ENCODE measurements at regions of chr1 and their contacts with region 1.

Region 1: GRCh38 chr1:228131766-228132165 is 8.3 kb upstream of the GUK1 start:
- DNase-seq: no peak
- ATAC-seq: no peak
- H3K4me3 ChIP-seq: no peak overlapping the region
- H3K4me3 Mint-ChIP-seq: no peak overlapping the region
- H3K27ac ChIP-seq: no peak overlapping the region
- H3K27ac Mint-ChIP-seq: no peak overlapping the region
- H3K4me1 ChIP-seq: no peaks in the 10 kb centered on the region
- H3K4me1 Mint-ChIP-seq: peaks cover 13% of the 10 kb centered on the region
- H3K27me3 ChIP-seq: no peaks in the 10 kb centered on the region
- H3K27me3 Mint-ChIP-seq: peaks cover 9% of the 10 kb centered on the region
- CTCF ChIP-seq: no peak

Region 2: DNA sequence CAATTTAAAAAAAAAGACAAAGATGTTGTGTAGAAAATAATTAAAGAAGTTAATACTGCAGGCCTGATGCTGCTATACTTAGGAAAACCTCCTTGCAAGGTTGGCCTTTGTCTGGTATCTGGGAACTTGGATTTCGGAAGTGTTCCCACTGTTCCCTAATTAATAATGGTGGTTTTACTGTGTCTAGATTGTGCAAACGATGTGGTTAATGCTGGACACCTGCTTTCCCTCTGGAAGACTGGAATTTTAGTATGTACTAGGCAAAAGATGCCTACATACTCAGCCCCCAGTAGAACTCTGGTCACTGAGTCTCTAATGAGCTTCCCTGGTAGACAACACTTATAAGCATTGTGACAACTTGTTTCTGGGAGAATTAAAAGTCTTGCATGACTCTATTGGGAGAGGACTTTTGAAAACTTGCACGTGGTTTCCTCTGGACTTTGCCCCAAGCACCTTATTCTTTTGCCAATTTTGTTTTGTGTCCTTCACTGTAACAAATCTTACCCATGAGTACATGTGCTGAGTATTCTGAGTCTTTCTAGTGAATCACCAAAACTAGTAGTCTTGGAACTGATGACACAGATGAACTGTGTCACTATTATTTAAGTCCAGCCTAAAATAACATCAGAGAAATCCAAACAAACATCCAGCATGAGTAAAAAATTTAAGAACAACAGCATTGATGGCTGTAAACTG is 1863.2 kb before region 1 on chr1:
- CTCF ChIA-PET with region 1: no interaction called
- POLR2A ChIA-PET with region 1: no interaction called
- intact Hi-C with region 1: no loop called
- DNase-seq: no peak
- ATAC-seq: no peak
- H3K4me3 ChIP-seq: no peak overlapping the region
- H3K4me3 Mint-ChIP-seq: no peak overlapping the region
- H3K27ac ChIP-seq: no peak overlapping the region
- H3K27ac Mint-ChIP-seq: no peak overlapping the region
- H3K4me1 ChIP-seq: no peaks in the 10 kb centered on the region
- H3K4me1 Mint-ChIP-seq: no peaks in the 10 kb centered on the region
- H3K27me3 ChIP-seq: no peaks in the 10 kb centered on the region
- H3K27me3 Mint-ChIP-seq: no peaks in the 10 kb centered on the region
- CTCF ChIP-seq: no peak

Region 3: GRCh38 chr1:227343727-227344551 is 787.8 kb before region 1 on chr1:
- CTCF ChIA-PET with region 1: no interaction called
- POLR2A ChIA-PET with region 1: no interaction called
- intact Hi-C with region 1: no loop called
- DNase-seq: no peak
- ATAC-seq: no peak
- H3K4me3 ChIP-seq: no peak overlapping the region
- H3K4me3 Mint-ChIP-seq: no peak overlapping the region
- H3K27ac ChIP-seq: no peak overlapping the region
- H3K27ac Mint-ChIP-seq: no peak overlapping the region
- H3K4me1 ChIP-seq: no peaks in the 10 kb centered on the region
- H3K4me1 Mint-ChIP-seq: no peaks in the 10 kb centered on the region
- H3K27me3 ChIP-seq: peaks cover 0 to 4% of the 10 kb centered on the region in 2 experiments
- H3K27me3 Mint-ChIP-seq: peaks cover 4% of the 10 kb centered on the region
- CTCF ChIP-seq: no peak

Region 4: GRCh38 chr1:228120351-228120750 is 11.4 kb before region 1 on chr1:
- CTCF ChIA-PET with region 1: interaction called, 11 read pairs
- POLR2A ChIA-PET with region 1: no interaction called
- intact Hi-C with region 1: no loop called
- DNase-seq: no peak
- ATAC-seq: no peak
- H3K4me3 ChIP-seq: no peak overlapping the region
- H3K4me3 Mint-ChIP-seq: no peak overlapping the region
- H3K27ac ChIP-seq: no peak overlapping the region
- H3K27ac Mint-ChIP-seq: no peak overlapping the region
- H3K4me1 ChIP-seq: no peaks in the 10 kb centered on the region
- H3K4me1 Mint-ChIP-seq: peaks cover 4% of the 10 kb centered on the region
- H3K27me3 ChIP-seq: no peaks in the 10 kb centered on the region
- H3K27me3 Mint-ChIP-seq: no peaks in the 10 kb centered on the region
- CTCF ChIP-seq: no peak

Region 5: DNA sequence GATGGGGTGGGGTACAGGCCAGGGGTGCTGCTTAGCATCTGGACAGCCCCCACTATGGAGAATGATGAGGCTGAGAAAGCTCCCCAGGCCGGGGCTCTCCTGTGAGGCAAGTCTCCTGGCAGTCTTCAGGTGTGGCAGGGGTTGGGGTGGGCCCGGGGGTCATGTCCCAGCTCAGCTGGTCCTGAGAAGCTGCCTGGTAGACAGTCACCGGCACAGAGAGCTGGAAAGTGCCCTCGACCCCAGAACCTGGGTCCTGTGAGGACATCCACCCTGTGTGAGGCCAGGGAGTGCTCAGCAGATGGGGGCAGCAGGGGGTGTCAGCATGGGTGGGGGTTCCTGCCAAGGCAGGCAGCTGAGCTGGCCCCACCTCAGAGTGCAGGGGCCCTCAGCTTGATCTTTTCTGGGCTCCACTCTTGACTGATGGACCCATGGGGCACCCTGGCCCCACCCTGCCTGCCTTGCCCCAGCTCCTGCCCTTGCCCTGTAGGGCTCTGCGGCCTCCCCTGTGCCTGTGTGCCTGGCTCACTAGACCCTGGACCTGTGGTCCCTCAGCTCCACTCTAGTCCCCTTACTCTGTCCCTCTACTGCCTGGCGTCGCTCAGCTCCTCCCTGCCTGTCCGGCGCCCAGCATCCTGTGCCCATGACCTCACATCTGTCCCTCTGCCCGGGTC is 39.6 kb after region 1 on chr1:
- CTCF ChIA-PET with region 1: interaction called, 49 read pairs
- POLR2A ChIA-PET with region 1: interaction called, 25 read pairs
- intact Hi-C with region 1: loop called (anchors 1 kb)
- DNase-seq: peak in 1 of 9 experiments; percentile 7
- ATAC-seq: no peak
- H3K4me3 ChIP-seq: no peak overlapping the region
- H3K4me3 Mint-ChIP-seq: no peak overlapping the region
- H3K27ac ChIP-seq: no peak overlapping the region
- H3K27ac Mint-ChIP-seq: no peak overlapping the region
- H3K4me1 ChIP-seq: peaks cover 7% of the 10 kb centered on the region
- H3K4me1 Mint-ChIP-seq: peaks cover 27% of the 10 kb centered on the region
- H3K27me3 ChIP-seq: no peaks in the 10 kb centered on the region
- H3K27me3 Mint-ChIP-seq: no peaks in the 10 kb centered on the region
- CTCF ChIP-seq: no peak

Region 6: GRCh38 chr1:228275739-228276421 is 144.1 kb after region 1 on chr1:
- CTCF ChIA-PET with region 1: interaction called, 3 read pairs
- POLR2A ChIA-PET with region 1: no interaction called
- intact Hi-C with region 1: loop called (anchors 1 to 5 kb)
- DNase-seq: peak; percentile 74 to 95 (median 92)
- ATAC-seq: peak; percentile 96
- H3K4me3 ChIP-seq: peak overlapping the region; percentile 75 to 81
- H3K4me3 Mint-ChIP-seq: peak overlapping the region; percentile 80
- H3K27ac ChIP-seq: peak overlapping the region; percentile 31 to 39
- H3K27ac Mint-ChIP-seq: peak overlapping the region; percentile 18
- H3K4me1 ChIP-seq: peaks cover 6% of the 10 kb centered on the region
- H3K4me1 Mint-ChIP-seq: peaks cover 12% of the 10 kb centered on the region
- H3K27me3 ChIP-seq: no peaks in the 10 kb centered on the region
- H3K27me3 Mint-ChIP-seq: no peaks in the 10 kb centered on the region
- CTCF ChIP-seq: no peak

Region 7: DNA sequence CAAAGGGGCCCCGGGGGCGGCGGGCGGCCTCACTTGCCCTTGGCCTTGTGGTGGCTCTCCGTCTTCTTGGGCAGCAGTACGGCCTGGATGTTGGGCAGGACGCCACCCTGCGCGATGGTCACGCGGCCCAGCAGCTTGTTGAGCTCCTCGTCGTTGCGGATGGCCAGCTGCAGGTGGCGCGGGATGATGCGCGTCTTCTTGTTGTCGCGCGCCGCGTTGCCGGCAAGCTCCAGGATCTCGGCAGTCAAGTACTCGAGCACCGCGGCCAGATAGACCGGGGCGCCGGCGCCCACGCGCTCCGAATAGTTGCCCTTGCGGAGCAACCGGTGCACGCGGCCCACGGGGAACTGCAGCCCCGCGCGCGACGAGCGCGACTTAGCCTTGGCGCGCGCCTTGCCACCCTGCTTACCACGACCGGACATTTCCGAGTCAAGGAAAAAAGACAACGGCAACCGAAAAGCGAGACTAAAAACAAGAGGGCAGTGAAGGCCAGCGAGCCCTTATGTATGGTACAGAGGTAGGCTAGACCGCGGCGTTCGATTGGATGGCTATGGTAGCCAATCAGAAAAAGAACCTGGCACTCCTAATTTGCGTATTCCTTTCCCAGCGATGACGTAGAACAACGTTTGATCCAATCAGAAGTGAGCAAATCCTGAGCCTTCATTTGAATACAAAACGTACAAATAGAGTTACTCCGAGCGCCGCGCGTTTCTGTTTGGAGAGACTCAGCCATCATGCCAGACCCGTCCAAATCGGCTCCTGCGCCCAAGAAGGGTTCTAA is 325.8 kb after region 1 on chr1:
- CTCF ChIA-PET with region 1: interaction called, 3 read pairs
- POLR2A ChIA-PET with region 1: no interaction called
- intact Hi-C with region 1: loop called (anchors 5 kb)
- DNase-seq: peak; percentile 68 to 98 (median 80)
- ATAC-seq: peak; percentile 85
- H3K4me3 ChIP-seq: peak overlapping the region; percentile 69 to 91
- H3K4me3 Mint-ChIP-seq: peak overlapping the region; percentile 93
- H3K27ac ChIP-seq: peak overlapping the region; percentile 91 to 93
- H3K27ac Mint-ChIP-seq: peak overlapping the region; percentile 99
- H3K4me1 ChIP-seq: peaks cover 23% of the 10 kb centered on the region
- H3K4me1 Mint-ChIP-seq: peaks cover 39% of the 10 kb centered on the region
- H3K27me3 ChIP-seq: no peaks in the 10 kb centered on the region
- H3K27me3 Mint-ChIP-seq: peaks cover 4% of the 10 kb centered on the region
- CTCF ChIP-seq: peak; percentile 31

Region 8: DNA sequence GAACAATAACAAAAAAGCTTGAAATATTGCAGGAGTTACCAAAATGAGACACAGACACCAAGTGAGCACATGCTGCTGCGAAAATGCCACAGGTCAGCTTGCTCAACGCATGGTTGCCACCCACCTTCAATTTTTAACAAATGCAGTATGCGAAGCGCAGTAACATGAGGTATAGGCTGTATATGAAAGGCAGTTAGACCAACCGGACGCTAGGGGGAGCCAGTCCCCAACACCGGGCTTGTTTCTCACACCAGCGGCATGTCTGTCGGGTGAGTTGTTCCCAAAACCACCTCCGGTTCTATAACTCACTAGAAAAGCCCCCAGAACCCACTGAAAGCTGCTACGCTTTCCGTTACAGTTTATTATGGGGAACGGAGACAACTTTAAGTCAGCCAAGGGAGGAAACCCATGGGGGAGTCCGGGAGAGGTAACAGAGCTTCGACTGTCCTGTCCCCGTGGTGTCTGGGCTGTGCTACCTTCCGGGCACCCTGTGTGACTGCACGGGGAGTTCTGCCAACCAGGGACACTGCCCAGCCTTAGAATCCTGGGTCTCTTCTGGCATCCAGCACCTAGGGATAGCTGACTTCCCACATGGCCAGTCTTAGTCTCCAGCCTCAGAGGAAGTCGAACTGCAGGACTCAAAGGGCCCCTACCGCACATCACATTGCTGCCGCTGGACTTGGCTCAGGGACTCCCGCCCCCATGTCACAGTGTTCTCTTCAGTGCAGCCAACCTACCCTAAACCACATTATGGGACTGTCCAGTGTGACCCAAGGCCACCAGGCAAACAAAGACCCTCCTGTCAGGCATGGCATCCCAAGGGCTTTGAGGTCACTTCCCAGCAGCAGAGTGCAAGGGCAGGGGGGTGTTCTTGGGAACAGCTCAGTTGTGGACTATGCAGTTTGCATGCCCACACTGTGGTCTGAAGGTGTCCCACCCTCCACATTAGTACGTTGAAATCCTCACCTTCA is 369.4 kb after region 1 on chr1:
- CTCF ChIA-PET with region 1: interaction called, 5 read pairs
- POLR2A ChIA-PET with region 1: no interaction called
- intact Hi-C with region 1: loop called in 1 of 2 experiments (anchors 5 kb)
- DNase-seq: peak; percentile 77 to 95 (median 89)
- ATAC-seq: peak; percentile 99
- H3K4me3 ChIP-seq: peak overlapping the region; percentile 35 to 54
- H3K4me3 Mint-ChIP-seq: peak overlapping the region; percentile 73
- H3K27ac ChIP-seq: peak overlapping the region in 1 of 2 experiments; percentile 56
- H3K27ac Mint-ChIP-seq: peak overlapping the region; percentile 77
- H3K4me1 ChIP-seq: peaks cover 17% of the 10 kb centered on the region
- H3K4me1 Mint-ChIP-seq: peaks cover 24% of the 10 kb centered on the region
- H3K27me3 ChIP-seq: no peaks in the 10 kb centered on the region
- H3K27me3 Mint-ChIP-seq: peaks cover 3% of the 10 kb centered on the region
- CTCF ChIP-seq: peak; percentile 87